ENCODE measurements at regions of chr6 and their contacts with region 1.

Region 1: DNA sequence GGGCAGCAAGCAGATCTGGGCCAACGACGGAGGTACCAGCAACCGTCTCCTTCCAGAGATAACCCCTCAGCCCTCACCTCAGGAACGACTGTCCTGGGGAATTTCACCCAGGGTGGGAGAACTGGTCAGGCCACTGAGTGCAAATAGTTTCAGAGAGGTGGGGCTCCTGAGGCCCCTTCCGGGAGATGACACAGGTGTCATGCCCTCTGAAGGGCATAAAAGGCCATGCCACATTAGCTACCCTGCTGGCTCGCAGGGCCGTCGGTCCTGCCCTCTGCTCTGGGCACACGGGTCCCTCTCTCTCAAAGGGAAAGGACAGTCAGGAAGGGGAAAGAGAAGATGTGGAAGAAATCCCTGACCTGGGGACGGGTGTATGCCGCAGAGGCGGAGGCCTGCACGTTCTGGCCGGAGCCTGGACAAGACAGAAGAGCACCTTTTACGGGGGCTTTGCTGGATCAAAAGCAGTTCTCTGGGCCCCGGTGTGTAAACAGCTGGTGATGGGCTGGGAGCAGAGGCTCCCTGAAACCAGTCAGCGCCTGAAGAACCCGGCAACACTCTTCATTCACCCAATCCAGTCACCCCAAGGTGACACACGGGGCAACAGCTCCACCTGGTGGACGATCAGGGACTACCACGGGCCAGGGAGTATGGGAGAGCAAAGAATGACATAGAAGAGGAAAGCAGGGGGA is 6.4 kb upstream of the TAF8 start:
- DNase-seq: peak; percentile 87 to 95 (median 90)
- H3K4me3 ChIP-seq: peak overlapping the region in 1 of 4 donors; percentile 35
- H3K27ac ChIP-seq: peak overlapping the region in 3 of 5 donors; percentile 55 to 89 (median 75)
- H3K4me1 ChIP-seq: peaks cover 30 to 58% of the 10 kb centered on the region in 2 donors
- H3K27me3 ChIP-seq: no peaks in the 10 kb centered on the region
- CTCF ChIP-seq: peak; percentile 95 to 99 (median 98)
- POLR2A ChIP-seq: no peak

Region 2: GRCh38 chr6:41846666-41847237 is 197.2 kb before region 1 on chr6:
- intact Hi-C with region 1: loop called in 1 of 2 experiments (anchors 5 kb)
- DNase-seq: peak; percentile 76 to 91 (median 79)
- H3K4me3 ChIP-seq: no peak overlapping the region
- H3K27ac ChIP-seq: peak overlapping the region in 3 of 5 donors; percentile 33 to 69 (median 51)
- H3K4me1 ChIP-seq: peaks cover 0 to 9% of the 10 kb centered on the region in 2 donors
- H3K27me3 ChIP-seq: no peaks in the 10 kb centered on the region
- CTCF ChIP-seq: peak; percentile 73 to 95 (median 86)
- POLR2A ChIP-seq: no peak